ENCODE measurements at regions of chr3 and their contacts with region 1.

Region 1: DNA sequence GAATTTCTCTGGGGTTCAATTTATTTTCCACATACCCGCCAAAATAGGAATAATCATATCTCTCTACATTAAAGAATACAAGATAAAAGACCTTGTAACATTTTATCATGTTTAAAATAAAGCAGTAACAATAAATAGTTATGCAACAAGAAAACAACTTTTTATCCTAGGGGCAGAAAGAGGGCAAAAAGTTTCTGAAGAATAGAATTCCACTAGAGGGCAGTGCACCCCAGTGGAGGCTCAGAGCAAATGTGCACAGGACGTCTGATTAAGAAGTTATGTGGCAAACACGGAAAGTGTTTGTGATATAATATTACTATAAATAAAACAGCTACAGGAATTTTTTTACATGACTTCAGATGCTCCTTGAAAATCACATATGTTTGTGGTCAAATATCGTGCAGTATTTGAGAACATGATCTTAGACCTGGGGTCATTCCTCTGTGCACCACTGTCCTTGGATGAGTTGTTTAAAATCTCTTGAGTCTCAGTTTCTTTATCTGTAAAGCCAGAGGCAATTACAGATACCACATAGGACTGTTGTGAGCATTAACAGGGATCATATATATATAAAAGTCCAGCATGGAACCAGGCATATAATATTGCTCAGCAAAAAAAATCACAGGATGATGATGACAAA is 13.2 kb upstream of the PIK3R4 start:
- DNase-seq: peak in 1 of 2 donors; percentile 54
- ATAC-seq: peak; percentile 44 to 89 (median 74)
- H3K4me3 ChIP-seq: peak overlapping the region in 1 of 10 donors; percentile 20
- H3K27ac ChIP-seq: peak overlapping the region in 2 of 10 donors; percentile 12 to 42
- H3K4me1 ChIP-seq: peaks cover 0 to 10% (median 0%) of the 10 kb centered on the region in 9 donors
- H3K27me3 ChIP-seq: no peaks in the 10 kb centered on the region
- CTCF ChIP-seq: peak; percentile 65 to 90 (median 85)

Region 2: GRCh38 chr3:130839813-130840212 is 80.0 kb after region 1 on chr3:
- intact Hi-C with region 1: loop called in 1 of 10 experiments (anchors 5 kb)
- DNase-seq: peak in 1 of 2 donors; percentile 7
- ATAC-seq: no peak
- H3K4me3 ChIP-seq: no peak overlapping the region
- H3K27ac ChIP-seq: peak overlapping the region in 6 of 10 donors; percentile 13 to 77 (median 30)
- H3K4me1 ChIP-seq: peaks cover 0 to 51% (median 21%) of the 10 kb centered on the region in 9 donors
- H3K27me3 ChIP-seq: no peaks in the 10 kb centered on the region
- CTCF ChIP-seq: no peak

Region 3: GRCh38 chr3:130892759-130893375 is 133.0 kb after region 1 on chr3:
- intact Hi-C with region 1: loop called (anchors 1 to 5 kb)
- DNase-seq: peak in 1 of 2 donors; percentile 84
- ATAC-seq: peak; percentile 49 to 91 (median 78)
- H3K4me3 ChIP-seq: peak overlapping the region; percentile 56 to 92 (median 81)
- H3K27ac ChIP-seq: peak overlapping the region; percentile 89 to 99 (median 97)
- H3K4me1 ChIP-seq: peaks cover 0 to 41% (median 21%) of the 10 kb centered on the region in 9 donors
- H3K27me3 ChIP-seq: no peaks in the 10 kb centered on the region
- CTCF ChIP-seq: peak; percentile 70 to 93 (median 83)

Region 4: GRCh38 chr3:131009698-131010097 is 249.9 kb after region 1 on chr3:
- intact Hi-C with region 1: loop called in 1 of 10 experiments (anchors 10 kb)
- DNase-seq: no peak
- ATAC-seq: no peak
- H3K4me3 ChIP-seq: no peak overlapping the region
- H3K27ac ChIP-seq: no peak overlapping the region
- H3K4me1 ChIP-seq: peaks cover 0 to 10% (median 0%) of the 10 kb centered on the region in 9 donors
- H3K27me3 ChIP-seq: no peaks in the 10 kb centered on the region
- CTCF ChIP-seq: no peak

Region 5: GRCh38 chr3:131026321-131027178 is 266.7 kb after region 1 on chr3 and contains the starts of genes ASTE1 and NEK11:
- intact Hi-C with region 1: loop called in 2 of 10 experiments (anchors 10 kb)
- DNase-seq: peak; percentile 89 to 91
- ATAC-seq: peak; percentile 99 to 100 (median 99)
- H3K4me3 ChIP-seq: peak within 1 kb of the TSS; percentile 26 to 86 (median 75)
- H3K27ac ChIP-seq: peak within 1 kb of the TSS in 9 of 10 donors; percentile 62 to 94 (median 89)
- H3K4me1 ChIP-seq: peaks cover 0 to 51% (median 39%) of the 10 kb centered on the region in 9 donors
- H3K27me3 ChIP-seq: no peaks in the 10 kb centered on the region
- CTCF ChIP-seq: no peak
- total RNA-seq, gene ASTE1: 1.5 to 4.5 (median 3.5) TPM
- total RNA-seq, gene NEK11: 1.3 to 3.7 (median 2.1) TPM

Measured in heart right ventricle (tissue), 16 donors.